Activated B cell treated with CpG ODN at 0.5 μM for 24 hours (primary cell): ENCODE measurements at regions of chr16 and their contacts with region 1.

Region 1: DNA sequence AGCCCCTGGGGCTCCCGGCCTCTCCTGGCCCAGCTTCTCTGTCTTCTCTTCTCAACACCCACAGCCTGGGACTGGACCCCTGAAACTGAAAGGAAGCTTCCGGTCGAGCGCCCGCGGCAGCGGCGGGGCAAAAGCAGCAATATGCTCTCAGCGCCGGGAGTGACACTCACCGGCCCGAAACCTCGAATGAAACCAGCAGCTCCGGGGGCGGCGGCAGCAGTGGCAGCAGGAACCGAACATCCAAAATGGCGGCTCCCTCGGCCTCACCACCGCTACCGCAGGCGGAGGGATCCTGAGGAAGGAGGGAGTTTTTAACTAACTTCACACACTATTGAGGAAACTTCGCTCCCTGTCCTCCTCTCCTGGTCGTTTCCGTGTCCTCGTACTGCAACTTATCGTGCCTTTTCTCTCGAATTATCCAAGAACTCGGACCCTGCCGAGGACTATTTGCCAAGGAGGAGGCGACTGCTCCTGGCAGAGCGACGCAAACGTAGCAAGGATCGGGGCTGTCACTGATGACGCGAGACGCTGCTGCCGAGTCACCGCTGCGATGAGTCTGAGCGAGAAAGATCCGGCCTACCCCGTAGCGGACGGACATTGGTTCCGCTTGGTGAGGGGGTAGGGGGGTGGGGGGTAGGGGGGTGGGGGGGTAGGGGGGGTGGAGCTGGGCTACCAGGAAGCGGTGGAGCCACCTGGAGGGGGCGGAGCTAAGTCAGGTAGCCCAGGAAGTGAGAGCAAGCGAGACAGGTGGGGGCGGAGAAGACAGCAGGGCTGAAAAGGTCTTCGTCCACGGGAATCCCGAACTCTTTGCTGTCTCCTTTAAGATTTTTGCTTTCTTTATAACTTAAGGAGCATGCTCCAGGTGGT is at the start of gene AP1G1:
- DNase-seq: peak; percentile 79
- ATAC-seq: peak; percentile 86
- H3K4me3 Mint-ChIP-seq: peak within 1 kb of the TSS; percentile 98
- H3K27ac Mint-ChIP-seq: peak within 1 kb of the TSS; percentile 100
- H3K4me1 Mint-ChIP-seq: peaks cover 35% of the 10 kb centered on the region
- H3K27me3 Mint-ChIP-seq: no peaks in the 10 kb centered on the region
- CTCF ChIP-seq: no peak
- total RNA-seq, gene AP1G1: 112 and 120 TPM in 2 replicates

Region 2: GRCh38 chr16:71484006-71484893 is 324.6 kb before region 1 on chr16:
- CTCF ChIA-PET with region 1: no interaction called
- POLR2A ChIA-PET with region 1: no interaction called
- intact Hi-C with region 1: loop called (anchors 10 kb)
- DNase-seq: peak; percentile 75
- ATAC-seq: peak; percentile 85
- H3K4me3 Mint-ChIP-seq: peak overlapping the region; percentile 89
- H3K27ac Mint-ChIP-seq: peak overlapping the region; percentile 92
- H3K4me1 Mint-ChIP-seq: peaks cover 17% of the 10 kb centered on the region
- H3K27me3 Mint-ChIP-seq: peaks cover 8% of the 10 kb centered on the region
- CTCF ChIP-seq: no peak

Region 3: GRCh38 chr16:71693164-71693563 is 115.7 kb before region 1 on chr16:
- CTCF ChIA-PET with region 1: no interaction called
- POLR2A ChIA-PET with region 1: no interaction called
- intact Hi-C with region 1: no loop called
- DNase-seq: no peak
- ATAC-seq: peak; percentile 62
- H3K4me3 Mint-ChIP-seq: peak overlapping the region; percentile 6
- H3K27ac Mint-ChIP-seq: peak overlapping the region; percentile 50
- H3K4me1 Mint-ChIP-seq: peaks cover 23% of the 10 kb centered on the region
- H3K27me3 Mint-ChIP-seq: no peaks in the 10 kb centered on the region
- CTCF ChIP-seq: no peak

Region 4: GRCh38 chr16:71781741-71782140 is 27.1 kb before region 1 on chr16:
- CTCF ChIA-PET with region 1: no interaction called
- POLR2A ChIA-PET with region 1: interaction called, 10 read pairs
- intact Hi-C with region 1: no loop called
- DNase-seq: no peak
- ATAC-seq: no peak
- H3K4me3 Mint-ChIP-seq: no peak overlapping the region
- H3K27ac Mint-ChIP-seq: no peak overlapping the region
- H3K4me1 Mint-ChIP-seq: peaks cover 24% of the 10 kb centered on the region
- H3K27me3 Mint-ChIP-seq: no peaks in the 10 kb centered on the region
- CTCF ChIP-seq: no peak

Region 5: DNA sequence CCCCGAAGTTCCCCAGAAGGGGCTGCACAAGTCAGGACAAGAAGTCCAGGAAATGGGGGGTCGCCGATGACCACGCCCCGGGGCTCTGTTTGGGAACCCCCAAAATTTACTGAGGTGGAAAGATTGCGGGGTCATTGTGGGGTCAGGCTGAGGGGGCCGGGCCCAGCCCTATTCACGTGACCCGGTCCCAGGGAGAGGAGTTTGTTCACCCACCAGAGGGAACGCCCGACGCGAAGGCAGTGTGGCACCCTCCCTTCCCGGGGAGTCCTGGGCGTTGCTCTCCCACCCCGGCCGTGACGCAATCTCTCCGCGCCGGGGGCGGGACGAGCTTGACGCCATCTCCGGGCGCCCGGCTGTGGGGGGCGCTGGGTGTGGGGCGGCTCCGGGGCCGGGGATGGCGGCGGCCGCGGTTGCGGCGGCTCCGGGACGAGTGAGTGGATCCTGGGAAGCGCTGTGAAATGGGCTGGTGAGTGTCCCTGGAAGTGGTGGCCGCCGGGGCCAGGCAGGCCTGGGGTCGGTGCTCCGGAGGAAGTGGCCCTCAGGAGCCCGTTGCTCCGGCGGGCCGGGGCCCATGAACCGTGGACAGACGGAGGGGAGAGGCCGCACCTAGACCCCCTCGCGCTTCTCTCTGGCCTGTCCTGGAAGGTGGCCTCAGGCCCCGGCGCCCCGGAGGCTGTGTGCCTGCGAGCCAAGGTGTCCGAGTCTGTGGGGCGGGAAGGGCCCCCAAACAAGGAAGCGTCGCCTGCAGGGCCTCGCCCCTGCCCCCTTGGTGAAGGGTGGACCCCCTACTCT is 37.0 kb after region 1 on chr16 and contains the start of gene ATXN1L:
- CTCF ChIA-PET with region 1: interaction called, 3 read pairs
- POLR2A ChIA-PET with region 1: interaction called, 60 read pairs
- intact Hi-C with region 1: loop called (anchors 1 kb)
- DNase-seq: peak; percentile 99
- ATAC-seq: peak; percentile 89
- H3K4me3 Mint-ChIP-seq: peak within 1 kb of the TSS; percentile 92
- H3K27ac Mint-ChIP-seq: peak within 1 kb of the TSS; percentile 98
- H3K4me1 Mint-ChIP-seq: peaks cover 51% of the 10 kb centered on the region
- H3K27me3 Mint-ChIP-seq: no peaks in the 10 kb centered on the region
- CTCF ChIP-seq: no peak
- total RNA-seq, gene ATXN1L: 24.9 and 28.3 TPM in 2 replicates

Region 6: GRCh38 chr16:71883849-71884638 is 75.2 kb after region 1 on chr16 and contains the start of gene ZNF821:
- CTCF ChIA-PET with region 1: interaction called, 19 read pairs
- POLR2A ChIA-PET with region 1: interaction called, 110 read pairs
- intact Hi-C with region 1: loop called (anchors 1 kb)
- DNase-seq: peak; percentile 81
- ATAC-seq: peak; percentile 75
- H3K4me3 Mint-ChIP-seq: peak within 1 kb of the TSS; percentile 98
- H3K27ac Mint-ChIP-seq: peak within 1 kb of the TSS; percentile 94
- H3K4me1 Mint-ChIP-seq: peaks cover 52% of the 10 kb centered on the region
- H3K27me3 Mint-ChIP-seq: no peaks in the 10 kb centered on the region
- CTCF ChIP-seq: no peak
- total RNA-seq, gene ZNF821: 10.6 and 13.6 TPM in 2 replicates

Region 7: GRCh38 chr16:72093448-72094265 is 284.8 kb after region 1 on chr16 and contains the starts of genes DHX38 and TXNL4B:
- CTCF ChIA-PET with region 1: no interaction called
- POLR2A ChIA-PET with region 1: interaction called, 8 read pairs
- intact Hi-C with region 1: loop called (anchors 1 kb)
- DNase-seq: peak; percentile 77
- ATAC-seq: peak; percentile 96
- H3K4me3 Mint-ChIP-seq: peak within 1 kb of the TSS; percentile 99
- H3K27ac Mint-ChIP-seq: peak within 1 kb of the TSS; percentile 96
- H3K4me1 Mint-ChIP-seq: peaks cover 47% of the 10 kb centered on the region
- H3K27me3 Mint-ChIP-seq: no peaks in the 10 kb centered on the region
- CTCF ChIP-seq: no peak
- total RNA-seq, gene DHX38: 107 and 118 TPM in 2 replicates
- total RNA-seq, gene TXNL4B: 13.1 and 13.8 TPM in 2 replicates